ENCODE measurements at regions of chr1 and their contacts with region 1.

Region 1: GRCh38 chr1:39960431-39960958 is 5.5 kb downstream of the MFSD2A start:
- DNase-seq: no peak
- H3K4me3 ChIP-seq: no peak overlapping the region
- H3K27me3 ChIP-seq: no peaks in the 10 kb centered on the region
- CTCF ChIP-seq: no peak

Region 2: GRCh38 chr1:39933956-39934941 is 26.2 kb before region 1 on chr1:
- CTCF ChIA-PET with region 1: interaction called, 4 read pairs
- POLR2A ChIA-PET with region 1: interaction called, 16 read pairs
- DNase-seq: peak; percentile 96
- H3K4me3 ChIP-seq: no peak overlapping the region
- H3K27me3 ChIP-seq: peaks cover under 1% of the 10 kb centered on the region; the same call in 1 of the 2 replicates
- CTCF ChIP-seq: no peak